ENCODE measurements at regions of chr16 and their contacts with region 1.

Region 1: GRCh38 chr16:56481468-56482112 is 30.2 kb downstream of the OGFOD1 start:
- DNase-seq: peak; percentile 40
- ATAC-seq: no peak
- H3K4me3 ChIP-seq: no peak overlapping the region
- H3K27ac ChIP-seq: no peak overlapping the region
- H3K4me1 ChIP-seq: peaks cover 1% of the 10 kb centered on the region; the same call in 1 of the 2 replicates
- H3K27me3 ChIP-seq: no peaks in the 10 kb centered on the region
- CTCF ChIP-seq: no peak
- POLR2A ChIP-seq: no peak
- RAD21 ChIP-seq: no peak

Region 2: GRCh38 chr16:56317998-56318826 is 163.4 kb before region 1 on chr16:
- CTCF ChIA-PET with region 1: no interaction called
- POLR2A ChIA-PET with region 1: no interaction called
- dilution Hi-C with region 1: no loop called
- in situ Hi-C with region 1: no loop called
- intact Hi-C with region 1: no loop called
- DNase-seq: peak; percentile 70
- ATAC-seq: peak; percentile 100
- H3K4me3 ChIP-seq: no peak overlapping the region
- H3K27ac ChIP-seq: no peak overlapping the region
- H3K4me1 ChIP-seq: no peaks in the 10 kb centered on the region
- H3K27me3 ChIP-seq: peaks cover 28% of the 10 kb centered on the region
- CTCF ChIP-seq: peak; percentile 97
- POLR2A ChIP-seq: peak; percentile 55; the same call in 1 of the 2 replicates
- RAD21 ChIP-seq: peak; percentile 100

Region 3: DNA sequence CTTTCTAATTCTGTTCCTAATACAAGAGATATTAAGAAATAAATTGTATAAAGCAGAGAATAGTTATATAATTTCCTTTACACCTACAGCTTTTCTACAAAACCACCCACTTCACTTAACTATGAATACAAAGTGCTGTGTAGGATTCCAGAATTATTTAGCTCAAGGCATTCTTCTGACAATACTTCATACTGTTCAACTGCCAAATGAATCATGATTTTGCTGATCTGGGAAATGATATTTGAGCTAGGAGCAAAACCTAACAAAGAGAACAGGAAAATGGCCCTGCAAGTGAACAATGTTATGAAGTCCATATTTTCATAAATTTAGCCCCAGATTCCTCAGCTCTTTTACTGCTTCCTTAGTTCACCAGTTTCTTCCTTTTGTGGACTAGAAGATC is 25.4 kb after region 1 on chr16:
- CTCF ChIA-PET with region 1: no interaction called
- POLR2A ChIA-PET with region 1: no interaction called
- dilution Hi-C with region 1: no loop called
- in situ Hi-C with region 1: no loop called
- intact Hi-C with region 1: no loop called
- DNase-seq: peak; percentile 80
- ATAC-seq: peak; percentile 91
- H3K4me3 ChIP-seq: no peak overlapping the region
- H3K27ac ChIP-seq: no peak overlapping the region
- H3K4me1 ChIP-seq: 0 out of 2 replicates have a peak, but pooled peaks cover 1% of the 10 kb centered on the region
- H3K27me3 ChIP-seq: no peaks in the 10 kb centered on the region
- CTCF ChIP-seq: no peak
- POLR2A ChIP-seq: no peak
- RAD21 ChIP-seq: no peak

Region 4: GRCh38 chr16:56547120-56547948 is 65.7 kb after region 1 on chr16:
- CTCF ChIA-PET with region 1: no interaction called
- POLR2A ChIA-PET with region 1: no interaction called
- dilution Hi-C with region 1: no loop called
- in situ Hi-C with region 1: loop called (anchors 10 kb)
- intact Hi-C with region 1: no loop called
- DNase-seq: peak; percentile 85
- ATAC-seq: peak; percentile 82
- H3K4me3 ChIP-seq: no peak overlapping the region
- H3K27ac ChIP-seq: no peak overlapping the region
- H3K4me1 ChIP-seq: peaks cover 11% of the 10 kb centered on the region
- H3K27me3 ChIP-seq: peaks cover 2% of the 10 kb centered on the region; the same call in 1 of the 2 replicates
- CTCF ChIP-seq: no peak
- POLR2A ChIP-seq: no peak
- RAD21 ChIP-seq: no peak

Region 5: GRCh38 chr16:56691885-56692284 is 210.3 kb after region 1 on chr16:
- CTCF ChIA-PET with region 1: no interaction called
- POLR2A ChIA-PET with region 1: no interaction called
- dilution Hi-C with region 1: no loop called
- in situ Hi-C with region 1: loop called (anchors 10 kb)
- intact Hi-C with region 1: no loop called
- DNase-seq: peak; percentile 17
- ATAC-seq: no peak
- H3K4me3 ChIP-seq: no peak overlapping the region
- H3K27ac ChIP-seq: no peak overlapping the region
- H3K4me1 ChIP-seq: no peaks in the 10 kb centered on the region
- H3K27me3 ChIP-seq: no peaks in the 10 kb centered on the region
- CTCF ChIP-seq: no peak
- POLR2A ChIP-seq: no peak
- RAD21 ChIP-seq: no peak

Region 6: DNA sequence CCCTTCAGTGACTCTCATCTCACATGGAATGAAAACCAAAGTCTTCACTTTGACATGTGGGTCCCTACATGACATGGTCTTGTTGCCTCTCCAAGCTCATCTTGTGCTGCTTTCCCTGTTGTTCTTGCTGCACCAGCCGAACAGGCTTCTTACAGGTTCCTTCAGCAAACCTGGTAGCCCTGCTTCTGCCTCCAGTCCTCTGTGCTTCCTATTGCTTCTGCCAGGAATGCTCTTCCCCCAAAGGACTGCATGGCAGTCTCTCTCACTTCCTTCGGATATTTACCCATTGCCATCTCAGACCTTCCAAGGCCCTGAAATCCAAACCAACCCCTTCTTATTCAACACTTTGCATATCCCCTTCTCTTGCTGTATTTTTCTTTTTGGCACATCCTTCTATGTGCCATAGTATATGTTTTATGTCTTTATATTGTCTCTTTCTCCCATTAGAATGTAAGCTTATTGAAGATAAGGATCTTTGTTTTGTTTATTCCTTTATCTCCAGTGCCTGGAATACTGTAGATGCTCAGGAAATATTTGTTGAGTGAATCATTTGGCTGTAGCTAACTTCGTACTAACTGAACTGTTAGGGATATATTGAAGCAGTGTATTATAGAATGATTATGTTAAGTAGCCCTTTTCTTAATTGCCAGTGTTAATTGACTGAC is 325.6 kb after region 1 on chr16:
- CTCF ChIA-PET with region 1: no interaction called
- POLR2A ChIA-PET with region 1: no interaction called
- dilution Hi-C with region 1: no loop called
- in situ Hi-C with region 1: no loop called
- intact Hi-C with region 1: no loop called
- DNase-seq: peak; percentile 84
- ATAC-seq: peak; percentile 95
- H3K4me3 ChIP-seq: no peak overlapping the region
- H3K27ac ChIP-seq: peak overlapping the region; percentile 63
- H3K4me1 ChIP-seq: peaks cover 14% of the 10 kb centered on the region
- H3K27me3 ChIP-seq: no peaks in the 10 kb centered on the region
- CTCF ChIP-seq: no peak
- POLR2A ChIP-seq: no peak
- RAD21 ChIP-seq: no peak

Region 7: DNA sequence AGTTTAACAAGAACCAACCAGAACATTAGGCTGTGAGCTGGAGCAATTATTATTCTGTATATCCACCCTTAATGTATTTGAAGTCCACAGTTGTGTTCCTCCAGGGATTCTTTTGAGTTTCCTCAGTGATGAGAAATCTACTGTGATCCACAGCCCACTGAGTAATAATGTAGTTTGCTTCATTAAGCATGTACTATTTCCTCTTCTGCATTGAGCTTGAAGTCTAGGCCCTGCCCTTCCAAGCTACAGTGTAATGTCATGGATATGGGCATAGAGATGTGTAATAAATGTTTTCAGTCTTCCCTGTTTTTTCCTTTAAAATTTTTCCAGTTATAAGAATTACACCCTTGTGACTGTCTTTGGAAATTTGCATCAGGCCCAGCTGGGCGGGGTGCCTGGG is 347.1 kb after region 1 on chr16:
- CTCF ChIA-PET with region 1: no interaction called
- POLR2A ChIA-PET with region 1: interaction called, 10 read pairs
- dilution Hi-C with region 1: no loop called
- in situ Hi-C with region 1: no loop called
- intact Hi-C with region 1: no loop called
- DNase-seq: no peak
- ATAC-seq: no peak
- H3K4me3 ChIP-seq: no peak overlapping the region
- H3K27ac ChIP-seq: no peak overlapping the region
- H3K4me1 ChIP-seq: peaks cover 2% of the 10 kb centered on the region
- H3K27me3 ChIP-seq: no peaks in the 10 kb centered on the region
- CTCF ChIP-seq: no peak
- POLR2A ChIP-seq: no peak
- RAD21 ChIP-seq: no peak

Measured in IMR-90 (cell line).